ENCODE measurements at regions of chr1 and their contacts with region 1.

Region 1: GRCh38 chr1:58823481-58824010 is 39.7 kb upstream of the JUN start:
- DNase-seq: peak; percentile 88
- H3K4me3 ChIP-seq: no peak overlapping the region
- H3K27ac ChIP-seq: no peak overlapping the region
- H3K4me1 ChIP-seq: peaks cover 33% of the 10 kb centered on the region
- H3K27me3 ChIP-seq: no peaks in the 10 kb centered on the region
- CTCF ChIP-seq: no peak

Region 2: DNA sequence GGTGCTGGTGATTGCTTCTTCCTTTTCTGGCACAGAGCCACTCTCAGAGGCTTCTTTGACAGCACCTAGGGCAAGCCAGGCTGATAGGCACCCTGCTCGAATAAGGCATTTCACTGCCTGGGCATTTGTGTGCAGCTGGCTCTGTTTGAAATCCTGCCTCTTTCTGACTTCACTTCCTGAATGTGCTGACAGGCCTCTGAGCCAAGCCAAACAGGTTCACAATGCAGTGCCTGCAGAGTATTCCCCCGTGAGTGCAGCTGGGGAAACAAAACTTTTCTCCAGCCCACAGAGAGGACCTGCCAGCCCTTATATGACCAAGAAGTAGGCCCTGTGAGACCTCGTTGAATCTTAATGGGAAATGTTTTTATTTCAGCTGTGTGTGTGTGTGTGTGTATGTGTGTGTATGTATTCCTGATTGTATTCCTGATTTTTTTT is 50.1 kb before region 1 on chr1:
- CTCF ChIA-PET with region 1: no interaction called
- dilution Hi-C with region 1: no loop called
- in situ Hi-C with region 1: no loop called
- intact Hi-C with region 1: no loop called
- DNase-seq: no peak
- H3K4me3 ChIP-seq: no peak overlapping the region
- H3K27ac ChIP-seq: no peak overlapping the region
- H3K4me1 ChIP-seq: peaks cover 6% of the 10 kb centered on the region
- H3K27me3 ChIP-seq: no peaks in the 10 kb centered on the region
- CTCF ChIP-seq: no peak

Region 3: GRCh38 chr1:58841455-58841854 is 17.9 kb after region 1 on chr1:
- CTCF ChIA-PET with region 1: no interaction called
- dilution Hi-C with region 1: no loop called
- in situ Hi-C with region 1: no loop called
- intact Hi-C with region 1: loop called (anchors 2 kb)
- DNase-seq: no peak
- H3K4me3 ChIP-seq: no peak overlapping the region
- H3K27ac ChIP-seq: no peak overlapping the region
- H3K4me1 ChIP-seq: peaks cover 13% of the 10 kb centered on the region
- H3K27me3 ChIP-seq: no peaks in the 10 kb centered on the region
- CTCF ChIP-seq: peak; percentile 19 to 44

Region 4: GRCh38 chr1:58857680-58858673 is 34.4 kb after region 1 on chr1:
- CTCF ChIA-PET with region 1: no interaction called
- dilution Hi-C with region 1: loop called (anchors 5 kb)
- in situ Hi-C with region 1: no loop called
- intact Hi-C with region 1: no loop called
- DNase-seq: no peak
- H3K4me3 ChIP-seq: no peak overlapping the region
- H3K27ac ChIP-seq: no peak overlapping the region
- H3K4me1 ChIP-seq: peaks cover 16% of the 10 kb centered on the region
- H3K27me3 ChIP-seq: no peaks in the 10 kb centered on the region
- CTCF ChIP-seq: no peak

Measured in mammary epithelial cell (primary cell).